Stomach (tissue), 19 donors: ENCODE measurements at regions of chr17 and their contacts with region 1.

Region 1: DNA sequence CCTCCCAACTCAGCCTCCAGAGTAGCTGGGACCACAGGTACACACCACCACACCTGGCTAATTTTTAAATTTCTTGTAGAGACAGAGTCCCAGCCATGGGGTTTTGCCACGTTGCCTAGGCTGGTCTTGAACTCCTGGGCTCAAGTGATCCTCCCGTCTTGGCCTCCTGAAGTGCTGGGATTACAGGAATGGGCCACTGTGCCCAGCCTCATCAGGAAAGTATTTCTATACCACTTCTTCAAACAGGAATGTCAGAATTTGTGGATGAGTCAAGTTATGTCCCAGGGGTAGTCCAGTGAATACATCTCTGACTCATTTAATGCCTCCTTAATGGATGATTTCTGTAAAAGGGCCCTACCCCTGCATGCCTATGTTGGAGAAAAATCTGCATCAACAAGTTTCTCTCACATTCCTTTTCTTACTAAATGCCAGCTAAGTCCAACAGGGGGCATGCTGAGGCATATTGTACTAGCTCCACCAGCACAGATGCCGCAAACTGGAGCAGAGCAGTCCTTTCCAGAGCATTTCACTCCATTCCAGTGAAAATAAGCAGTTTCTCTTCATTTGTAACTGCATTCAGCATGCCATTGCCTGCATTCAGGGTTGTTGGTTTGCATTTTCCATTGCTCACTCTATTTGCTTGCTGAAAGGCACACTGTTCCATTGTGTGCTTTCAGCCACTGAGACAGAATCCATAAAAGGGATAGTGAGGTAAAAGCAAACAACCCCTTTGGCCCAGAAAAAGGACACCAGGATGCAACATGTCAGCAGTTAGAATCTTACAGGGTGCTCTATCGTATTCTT is 5.3 kb upstream of the CAVIN1 start:
- DNase-seq: peak; percentile 66 to 91
- H3K4me3 ChIP-seq: no peak overlapping the region
- H3K27ac ChIP-seq: peak overlapping the region in 1 of 5 donors; percentile 33
- H3K4me1 ChIP-seq: peaks cover 6 to 28% (median 15%) of the 10 kb centered on the region in 4 donors
- H3K27me3 ChIP-seq: peaks cover 0 to 7% (median 0%) of the 10 kb centered on the region in 3 donors
- CTCF ChIP-seq: peak in 5 of 7 experiments; percentile 62 to 81 (median 67)
- EP300 ChIP-seq: no peak
- POLR2A ChIP-seq: no peak

Region 2: GRCh38 chr17:42527273-42527703 is 98.9 kb after region 1 on chr17:
- intact Hi-C with region 1: loop called (anchors 5 kb)
- DNase-seq: peak; percentile 75 to 93
- H3K4me3 ChIP-seq: no peak overlapping the region
- H3K27ac ChIP-seq: peak overlapping the region in 2 of 5 donors; percentile 54 to 58
- H3K4me1 ChIP-seq: peaks cover 27 to 73% (median 41%) of the 10 kb centered on the region in 4 donors
- H3K27me3 ChIP-seq: no peaks in the 10 kb centered on the region
- CTCF ChIP-seq: peak in 5 of 7 experiments; percentile 69 to 92 (median 80)
- EP300 ChIP-seq: no peak
- POLR2A ChIP-seq: no peak

Region 3: GRCh38 chr17:42566883-42567573 is 138.7 kb after region 1 on chr17 and contains the start of gene MLX:
- intact Hi-C with region 1: no loop called
- DNase-seq: peak; percentile 97 to 98
- H3K4me3 ChIP-seq: peak within 1 kb of the TSS; percentile 73 to 94 (median 89)
- H3K27ac ChIP-seq: peak within 1 kb of the TSS; percentile 89 to 99 (median 97)
- H3K4me1 ChIP-seq: peaks cover 52 to 87% (median 86%) of the 10 kb centered on the region in 4 donors
- H3K27me3 ChIP-seq: no peaks in the 10 kb centered on the region
- CTCF ChIP-seq: no peak
- EP300 ChIP-seq: no peak
- POLR2A ChIP-seq: peak in 1 of 4 donors; percentile 25
- total RNA-seq, gene MLX: 39.7 to 101 (median 62.5) TPM